ENCODE measurements at regions of chr13 and their contacts with region 1.

Region 1: DNA sequence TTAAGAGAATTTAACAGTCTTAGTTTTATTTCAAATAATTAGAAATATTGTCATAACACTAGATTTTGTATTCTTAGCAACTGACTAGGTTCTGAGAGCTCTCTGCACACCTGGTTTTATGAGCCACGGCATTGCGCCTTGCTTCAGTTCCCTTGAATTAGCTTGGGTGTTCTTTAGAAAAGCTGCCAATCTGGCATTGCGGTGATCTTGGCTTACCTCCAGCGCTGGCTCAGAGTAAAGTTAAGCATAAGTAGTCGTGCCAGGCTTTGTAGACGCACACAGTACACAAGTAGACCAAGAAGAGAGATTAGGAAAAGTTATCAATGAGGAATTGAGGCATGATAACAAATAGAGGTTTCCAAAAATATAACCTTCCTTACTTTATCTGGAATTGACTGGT is 45.7 kb downstream of the TPP2 start:
- DNase-seq: peak; percentile 56 to 85
- ATAC-seq: peak; percentile 89 to 96
- H3K4me3 ChIP-seq: no peak overlapping the region
- H3K27ac ChIP-seq: peak overlapping the region; percentile 9 to 46 (median 44)
- H3K4me1 ChIP-seq: peaks cover 7 to 17% of the 10 kb centered on the region in 2 donors
- H3K27me3 ChIP-seq: no peaks in the 10 kb centered on the region
- CTCF ChIP-seq: no peak
- POLR2A ChIP-seq: no peak

Region 2: GRCh38 chr13:102460801-102461200 is 181.7 kb before region 1 on chr13:
- in situ Hi-C with region 1: no loop called
- intact Hi-C with region 1: no loop called
- DNase-seq: no peak
- ATAC-seq: no peak
- H3K4me3 ChIP-seq: no peak overlapping the region
- H3K27ac ChIP-seq: no peak overlapping the region
- H3K4me1 ChIP-seq: no peaks in the 10 kb centered on the region
- H3K27me3 ChIP-seq: no peaks in the 10 kb centered on the region
- CTCF ChIP-seq: no peak
- POLR2A ChIP-seq: no peak

Region 3: GRCh38 chr13:102555917-102556553 is 86.4 kb before region 1 on chr13:
- in situ Hi-C with region 1: no loop called
- intact Hi-C with region 1: no loop called
- DNase-seq: no peak
- ATAC-seq: peak in 1 of 2 donors; percentile 36
- H3K4me3 ChIP-seq: no peak overlapping the region
- H3K27ac ChIP-seq: no peak overlapping the region
- H3K4me1 ChIP-seq: no peaks in the 10 kb centered on the region
- H3K27me3 ChIP-seq: no peaks in the 10 kb centered on the region
- CTCF ChIP-seq: peak in 1 of 5 experiments; percentile 17
- POLR2A ChIP-seq: no peak

Region 4: DNA sequence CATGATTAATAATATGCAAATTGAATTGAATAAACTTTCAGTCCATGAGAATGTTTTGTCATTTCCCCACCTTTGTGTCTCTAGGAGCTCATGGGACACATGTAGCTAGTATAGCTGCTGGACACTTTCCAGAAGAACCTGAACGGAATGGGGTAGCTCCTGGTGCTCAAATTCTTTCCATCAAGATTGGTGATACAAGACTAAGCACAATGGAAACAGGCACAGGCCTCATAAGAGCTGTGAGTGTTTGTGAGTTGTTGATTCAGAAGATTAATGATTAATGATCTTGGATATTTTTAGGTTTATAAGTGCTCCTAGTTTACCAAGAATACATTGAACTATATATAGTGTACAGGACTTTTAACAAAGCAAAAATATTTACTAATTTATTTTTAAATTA is 15.5 kb before region 1 on chr13:
- in situ Hi-C with region 1: no loop called
- intact Hi-C with region 1: loop called (anchors 2 kb)
- DNase-seq: no peak
- ATAC-seq: no peak
- H3K4me3 ChIP-seq: no peak overlapping the region
- H3K27ac ChIP-seq: peak overlapping the region in 1 of 4 donors; percentile 24
- H3K4me1 ChIP-seq: peaks cover 0 to 9% of the 10 kb centered on the region in 2 donors
- H3K27me3 ChIP-seq: no peaks in the 10 kb centered on the region
- CTCF ChIP-seq: no peak
- POLR2A ChIP-seq: no peak

Region 5: DNA sequence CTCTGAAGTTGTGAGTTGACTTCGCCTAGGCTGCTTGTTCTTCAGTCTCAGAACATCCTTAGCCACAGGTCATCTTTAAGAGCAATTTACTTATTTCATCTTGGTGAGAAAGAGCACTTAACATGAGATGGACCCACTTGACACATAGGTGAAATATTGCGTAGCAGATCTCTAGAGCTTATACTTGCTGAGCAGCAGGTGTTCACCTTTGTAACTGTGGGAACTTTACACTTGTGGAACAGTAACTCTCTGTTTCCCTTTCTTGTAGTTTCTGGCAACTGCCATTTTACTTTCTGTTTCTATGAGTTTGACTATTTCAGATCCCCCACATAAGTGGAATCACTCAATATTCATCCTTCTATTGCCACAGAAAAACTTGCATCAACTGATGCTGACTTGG is 328.1 kb after region 1 on chr13:
- in situ Hi-C with region 1: no loop called
- intact Hi-C with region 1: no loop called
- DNase-seq: no peak
- ATAC-seq: no peak
- H3K4me3 ChIP-seq: no peak overlapping the region
- H3K27ac ChIP-seq: no peak overlapping the region
- H3K4me1 ChIP-seq: no peaks in the 10 kb centered on the region
- H3K27me3 ChIP-seq: no peaks in the 10 kb centered on the region
- CTCF ChIP-seq: no peak
- POLR2A ChIP-seq: no peak

Measured in gastrocnemius medialis (tissue), 4 donors.